ENCODE measurements at regions of chr7 and their contacts with region 1.

Region 1: DNA sequence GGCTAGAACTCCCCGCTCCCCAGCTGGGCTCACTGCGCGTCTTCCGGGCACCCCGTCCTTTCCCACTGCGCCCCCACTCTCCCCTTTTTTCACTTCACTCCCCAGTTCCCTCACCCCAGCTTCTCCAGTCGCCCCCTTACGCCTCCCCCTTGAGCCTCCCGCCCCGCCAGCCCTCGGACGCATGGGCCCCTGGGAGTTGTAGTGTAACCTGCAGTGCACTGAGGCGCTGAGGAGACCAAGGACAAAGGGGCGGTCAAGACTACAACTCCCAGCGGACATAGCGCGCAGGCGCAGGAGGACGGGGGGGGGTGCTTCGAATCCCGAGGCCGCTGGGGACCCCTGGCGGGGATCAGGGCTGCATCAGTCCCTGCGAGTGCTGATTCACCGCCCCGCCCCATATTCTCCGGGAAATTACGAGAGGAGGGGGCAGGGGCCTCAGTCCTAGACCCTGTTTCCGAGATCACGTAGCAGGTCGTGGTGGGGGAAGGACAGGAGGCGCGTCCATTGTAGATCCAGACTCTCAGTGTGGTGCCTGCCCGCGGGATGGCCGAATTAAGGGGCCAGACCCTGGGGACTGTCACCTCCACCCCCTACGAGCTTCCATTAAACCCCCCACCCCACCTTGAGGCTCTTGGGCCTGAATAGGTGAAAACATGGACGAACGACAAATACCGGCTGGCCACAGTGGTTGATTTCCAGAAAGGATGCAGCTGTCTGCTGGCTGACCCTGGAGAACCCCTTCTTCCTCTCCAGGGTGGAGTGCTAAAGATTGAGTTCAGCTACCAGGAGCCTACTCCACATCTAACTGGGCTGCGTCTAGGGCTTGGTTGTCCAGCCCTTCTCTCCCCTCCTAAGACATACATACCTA is 554 bp upstream of the YWHAG start:
- DNase-seq: peak; percentile 98
- H3K4me3 ChIP-seq: peak overlapping the region; percentile 89
- H3K27ac ChIP-seq: peak overlapping the region; percentile 95
- H3K27me3 ChIP-seq: no peaks in the 10 kb centered on the region
- CTCF ChIP-seq: peak; percentile 79

Region 2: DNA sequence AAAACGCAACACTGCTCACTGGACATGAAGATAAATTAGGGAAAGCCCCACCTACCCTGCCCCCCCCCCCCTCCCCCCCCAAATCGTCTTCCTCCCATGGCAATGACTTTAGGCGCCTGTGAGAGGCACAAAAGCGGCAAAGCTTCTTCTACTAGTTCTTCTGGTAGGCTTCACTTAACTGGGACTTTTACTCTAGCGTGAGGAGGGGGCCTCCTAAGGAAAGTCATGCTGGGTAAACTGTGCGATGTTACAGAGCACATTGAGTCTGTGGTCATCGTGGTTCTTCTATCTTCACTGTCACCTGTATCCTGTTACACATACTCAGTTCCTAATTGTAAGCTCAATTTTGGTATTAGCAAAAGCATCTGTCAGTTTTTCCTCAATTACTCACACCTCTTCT is 31.7 kb before region 1 on chr7:
- CTCF ChIA-PET with region 1: interaction called, 5 read pairs
- POLR2A ChIA-PET with region 1: interaction called, 11 read pairs
- DNase-seq: no peak
- H3K4me3 ChIP-seq: no peak overlapping the region
- H3K27ac ChIP-seq: no peak overlapping the region
- H3K27me3 ChIP-seq: no peaks in the 10 kb centered on the region
- CTCF ChIP-seq: no peak

Region 3: DNA sequence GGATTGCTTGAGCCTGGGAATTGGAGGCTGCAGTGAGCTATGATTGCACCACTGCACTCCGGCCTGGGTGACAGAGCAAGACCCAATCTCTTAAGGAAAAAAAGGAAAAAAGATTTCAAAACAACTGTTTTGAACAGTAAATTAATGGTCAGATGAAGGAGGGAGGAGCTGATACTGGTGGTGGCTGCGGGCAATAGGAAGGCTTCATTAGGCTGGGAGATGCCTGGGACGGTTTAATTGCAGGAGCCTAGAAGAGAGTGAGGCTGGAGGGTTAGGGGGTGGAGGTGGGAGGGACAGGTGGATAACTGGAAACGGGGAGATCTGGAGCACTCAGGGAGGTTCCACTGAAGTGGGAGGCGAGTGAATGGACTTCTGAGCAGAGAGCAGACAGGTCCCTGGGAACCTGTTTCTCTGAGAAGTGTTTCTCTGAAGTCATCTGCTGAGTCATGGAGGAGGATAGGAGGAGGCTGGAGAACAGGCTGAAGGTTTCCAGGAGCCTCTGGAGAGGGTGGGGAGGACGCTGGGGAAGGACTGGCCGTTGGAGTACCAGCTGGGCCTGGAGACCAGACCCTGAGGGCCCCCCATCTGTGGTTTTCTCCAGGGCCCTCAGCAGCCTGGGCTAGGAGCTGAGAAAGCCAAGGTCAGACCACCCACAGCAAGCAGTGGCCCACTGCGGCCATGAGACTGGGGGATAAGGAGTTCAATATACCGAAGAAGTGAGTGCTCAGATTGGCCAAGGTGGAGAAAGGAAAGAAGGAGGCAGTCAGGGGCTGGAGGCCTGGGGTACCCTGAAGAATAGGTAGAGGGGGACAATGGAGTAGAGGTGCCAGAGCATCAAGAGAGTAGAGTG is 13.9 kb after region 1 on chr7:
- CTCF ChIA-PET with region 1: interaction called, 8 read pairs
- POLR2A ChIA-PET with region 1: interaction called, 11 read pairs
- DNase-seq: peak; percentile 51
- H3K4me3 ChIP-seq: no peak overlapping the region
- H3K27ac ChIP-seq: peak overlapping the region; percentile 52
- H3K27me3 ChIP-seq: no peaks in the 10 kb centered on the region
- CTCF ChIP-seq: no peak

Measured in AG04450 (cell line).